Activated CD4-positive, alpha-beta T cell treated with anti-CD3 and anti-CD28 coated beads for 36 hours (primary cell): ENCODE measurements at regions of chr9 and their contacts with region 1.

Region 1: GRCh38 chr9:134024828-134025605 is at the start of gene BRD3OS:
- DNase-seq: peak; percentile 96
- ATAC-seq: peak; percentile 91
- H3K4me3 Mint-ChIP-seq: peak within 1 kb of the TSS; percentile 74
- H3K27ac Mint-ChIP-seq: no peak within 1 kb of the TSS
- H3K4me1 Mint-ChIP-seq: peaks cover 4% of the 10 kb centered on the region
- H3K27me3 Mint-ChIP-seq: no peaks in the 10 kb centered on the region
- total RNA-seq, gene BRD3OS: 15.1 to 18.0 TPM

Region 2: GRCh38 chr9:133701862-133702797 is 322.9 kb before region 1 on chr9:
- CTCF ChIA-PET with region 1: no interaction called
- POLR2A ChIA-PET with region 1: no interaction called
- intact Hi-C with region 1: no loop called
- DNase-seq: peak; percentile 88
- ATAC-seq: peak; percentile 87
- H3K4me3 Mint-ChIP-seq: peak overlapping the region; percentile 81
- H3K27ac Mint-ChIP-seq: peak overlapping the region; percentile 97
- H3K4me1 Mint-ChIP-seq: peaks cover 53% of the 10 kb centered on the region
- H3K27me3 Mint-ChIP-seq: no peaks in the 10 kb centered on the region

Region 3: DNA sequence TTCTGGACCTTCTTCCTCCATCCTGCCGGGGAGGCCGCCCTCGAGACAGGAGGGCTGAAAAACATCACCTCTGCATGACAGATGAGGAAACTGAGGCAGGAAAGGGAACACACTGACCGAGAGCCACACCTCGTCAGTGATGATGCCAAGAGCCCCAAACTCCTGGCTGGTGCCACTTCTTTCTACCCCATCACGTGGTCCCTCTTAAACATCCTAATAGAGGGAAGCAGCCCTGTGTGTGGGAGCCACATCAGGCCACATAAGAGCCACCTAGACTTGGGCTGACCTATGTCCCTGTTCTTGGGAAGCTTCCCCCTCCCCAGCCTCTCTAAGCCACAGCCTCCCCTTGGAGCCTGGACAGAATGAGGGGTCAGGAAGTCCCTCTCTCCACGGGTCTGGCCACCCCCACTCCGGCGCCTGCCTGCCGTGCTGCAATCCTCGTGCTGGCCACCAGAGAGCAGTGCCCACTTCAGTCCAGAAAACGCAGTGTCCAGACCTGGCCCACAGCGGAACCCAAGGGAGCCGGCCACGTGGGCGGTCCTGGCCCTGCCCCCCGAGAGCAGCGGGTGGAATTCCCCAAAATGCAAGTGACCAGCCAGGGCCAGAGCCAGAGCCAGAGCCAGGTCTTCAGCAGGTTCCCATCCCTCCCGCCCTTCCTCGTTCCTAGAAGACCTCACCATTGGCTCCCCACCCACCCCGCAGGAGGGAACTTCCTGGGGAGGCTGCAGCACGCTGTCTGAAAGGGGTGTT is 232.1 kb before region 1 on chr9:
- CTCF ChIA-PET with region 1: no interaction called
- POLR2A ChIA-PET with region 1: no interaction called
- intact Hi-C with region 1: loop called in 1 of 2 experiments (anchors 1 kb)
- DNase-seq: peak; percentile 70
- ATAC-seq: peak; percentile 75
- H3K4me3 Mint-ChIP-seq: no peak overlapping the region
- H3K27ac Mint-ChIP-seq: no peak overlapping the region
- H3K4me1 Mint-ChIP-seq: peaks cover 3% of the 10 kb centered on the region
- H3K27me3 Mint-ChIP-seq: peaks cover 1% of the 10 kb centered on the region

Region 4: GRCh38 chr9:134135343-134136118 is 110.5 kb after region 1 on chr9 and contains the start of gene WDR5:
- CTCF ChIA-PET with region 1: interaction called, 3 read pairs
- POLR2A ChIA-PET with region 1: interaction called, 5 read pairs
- intact Hi-C with region 1: loop called in 1 of 2 experiments (anchors 1 kb)
- DNase-seq: peak; percentile 95
- ATAC-seq: peak; percentile 78
- H3K4me3 Mint-ChIP-seq: peak within 1 kb of the TSS; percentile 98
- H3K27ac Mint-ChIP-seq: peak within 1 kb of the TSS; percentile 90
- H3K4me1 Mint-ChIP-seq: peaks cover 31% of the 10 kb centered on the region
- H3K27me3 Mint-ChIP-seq: no peaks in the 10 kb centered on the region
- total RNA-seq, gene WDR5: 51.4 to 59.2 TPM

Region 5: DNA sequence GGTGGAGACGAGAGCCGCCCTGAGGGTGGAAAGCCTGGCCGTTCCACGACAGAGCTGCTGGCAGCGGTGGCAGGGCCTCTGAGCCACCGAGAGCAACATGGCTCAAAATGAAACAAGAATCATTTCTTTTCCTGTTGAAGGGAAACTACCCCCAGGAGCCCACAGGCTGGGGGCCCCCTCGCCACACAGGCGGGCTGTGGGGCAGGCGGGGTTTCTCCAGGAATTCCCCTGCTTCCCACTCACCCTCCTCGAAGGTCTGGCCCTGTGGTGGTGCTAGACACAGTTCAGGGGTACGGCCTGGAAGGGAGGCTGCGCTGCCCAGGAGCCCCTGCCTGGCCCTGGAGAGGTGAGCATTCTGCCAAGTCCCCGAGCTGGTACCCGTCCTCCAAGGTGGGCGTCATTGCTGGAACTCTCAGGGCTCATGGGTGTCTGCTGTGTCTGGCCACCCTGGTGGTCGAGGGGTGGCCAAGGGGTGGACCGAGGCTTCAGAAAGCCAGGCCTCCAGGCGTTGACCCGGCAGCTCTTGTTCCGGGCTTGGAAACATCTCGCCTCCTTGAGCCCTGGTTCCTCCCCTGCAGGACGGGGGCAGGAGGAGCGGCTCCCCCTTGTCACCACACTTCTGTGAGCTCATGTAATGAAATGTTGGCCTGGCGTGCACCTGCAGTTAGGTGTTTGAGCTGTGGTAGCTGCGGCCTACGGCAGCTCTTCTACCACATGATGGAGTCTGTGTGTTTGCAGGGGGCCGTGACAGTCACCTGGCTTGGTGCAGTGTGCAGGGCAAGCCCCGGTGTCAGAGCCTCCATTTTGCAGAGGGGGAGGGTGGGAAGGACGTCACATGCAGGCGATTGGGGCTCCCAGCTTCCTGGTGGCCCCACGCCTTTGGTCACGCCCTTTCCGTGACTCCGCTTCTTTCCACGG is 366.6 kb after region 1 on chr9:
- CTCF ChIA-PET with region 1: no interaction called
- POLR2A ChIA-PET with region 1: no interaction called
- intact Hi-C with region 1: loop called in 1 of 2 experiments (anchors 1 kb)
- DNase-seq: peak; percentile 89
- ATAC-seq: peak; percentile 69
- H3K4me3 Mint-ChIP-seq: peak overlapping the region; percentile 75
- H3K27ac Mint-ChIP-seq: peak overlapping the region; percentile 95
- H3K4me1 Mint-ChIP-seq: peaks cover 64% of the 10 kb centered on the region
- H3K27me3 Mint-ChIP-seq: peaks cover 11% of the 10 kb centered on the region

Region 6: DNA sequence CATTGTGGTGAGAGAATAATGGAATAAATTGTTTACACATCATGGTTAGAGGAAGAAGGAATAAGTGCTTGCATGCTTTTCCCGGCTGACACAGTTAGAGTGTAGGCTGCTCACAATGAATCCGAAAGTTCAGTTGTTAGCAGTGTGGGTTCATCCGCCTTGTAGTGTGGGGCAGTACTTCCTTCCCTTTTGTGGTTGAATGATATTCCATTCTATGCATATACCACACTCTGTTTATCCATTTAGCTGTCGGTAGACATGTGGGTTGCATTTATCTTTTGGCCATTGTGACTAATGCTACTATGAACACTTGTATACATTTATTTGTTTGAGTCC is 700.6 kb after region 1 on chr9:
- CTCF ChIA-PET with region 1: no interaction called
- POLR2A ChIA-PET with region 1: no interaction called
- intact Hi-C with region 1: no loop called
- DNase-seq: no peak
- ATAC-seq: peak; percentile 76
- H3K4me3 Mint-ChIP-seq: no peak overlapping the region
- H3K27ac Mint-ChIP-seq: no peak overlapping the region
- H3K4me1 Mint-ChIP-seq: peaks cover 6% of the 10 kb centered on the region
- H3K27me3 Mint-ChIP-seq: peaks cover 7% of the 10 kb centered on the region

Region 7: GRCh38 chr9:135992486-135993408 is 1967.7 kb after region 1 on chr9:
- CTCF ChIA-PET with region 1: no interaction called
- POLR2A ChIA-PET with region 1: no interaction called
- intact Hi-C with region 1: loop called in 1 of 2 experiments (anchors 5 kb)
- DNase-seq: peak; percentile 68
- ATAC-seq: peak; percentile 71
- H3K4me3 Mint-ChIP-seq: no peak overlapping the region
- H3K27ac Mint-ChIP-seq: no peak overlapping the region
- H3K4me1 Mint-ChIP-seq: peaks cover 17% of the 10 kb centered on the region
- H3K27me3 Mint-ChIP-seq: no peaks in the 10 kb centered on the region